Activated CD4-positive, alpha-beta memory T cell treated with anti-CD3 and anti-CD28 coated beads for 36 hours (primary cell): ENCODE measurements at regions of chr6 and their contacts with region 1.

Region 1: GRCh38 chr6:143026696-143027449 is 33.8 kb upstream of the AIG1 start:
- DNase-seq: peak; percentile 73
- H3K4me3 Mint-ChIP-seq: no peak overlapping the region
- H3K27ac Mint-ChIP-seq: no peak overlapping the region
- H3K4me1 Mint-ChIP-seq: peaks cover 6% of the 10 kb centered on the region
- H3K27me3 Mint-ChIP-seq: no peaks in the 10 kb centered on the region

Region 2: DNA sequence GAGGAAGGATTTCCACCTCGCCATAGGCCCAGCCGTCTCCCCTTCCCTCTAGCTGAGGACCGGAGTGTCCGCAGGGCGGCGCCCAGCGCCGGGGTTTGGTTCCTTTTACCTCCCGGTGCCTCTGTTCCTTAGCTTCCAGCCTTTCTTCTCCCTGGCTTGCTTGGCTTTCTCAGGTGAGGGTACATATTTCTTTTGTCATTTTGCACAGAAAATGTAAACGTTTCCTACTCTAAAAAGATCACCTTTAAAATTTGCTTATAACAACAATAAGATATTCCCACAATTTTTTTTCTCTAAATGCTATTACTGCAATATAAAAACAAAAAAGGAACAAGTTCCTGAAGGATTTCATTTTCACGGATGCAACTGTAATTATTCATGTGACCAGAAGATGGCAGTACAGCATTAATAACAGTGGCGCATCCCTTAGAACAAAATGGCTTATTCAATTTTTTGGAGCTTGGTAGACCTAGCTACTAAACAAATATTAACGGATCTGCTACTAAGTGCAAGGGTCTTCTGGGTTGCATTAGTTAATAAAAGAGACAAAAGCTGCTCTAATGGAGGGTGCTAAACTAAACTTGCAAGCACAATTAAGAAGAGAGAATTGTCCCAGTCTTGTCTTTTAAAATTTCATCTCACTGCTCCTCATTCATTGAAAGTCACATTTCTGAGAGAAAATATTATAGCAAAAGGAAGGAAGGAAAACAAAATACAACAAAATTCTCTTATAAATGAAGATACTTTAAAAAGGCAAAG is 552.2 kb before region 1 on chr6:
- CTCF ChIA-PET with region 1: interaction called, 6 read pairs
- POLR2A ChIA-PET with region 1: no interaction called
- intact Hi-C with region 1: loop called (anchors 5 kb)
- DNase-seq: no peak
- H3K4me3 Mint-ChIP-seq: no peak overlapping the region
- H3K27ac Mint-ChIP-seq: no peak overlapping the region
- H3K4me1 Mint-ChIP-seq: no peaks in the 10 kb centered on the region
- H3K27me3 Mint-ChIP-seq: peaks cover 2% of the 10 kb centered on the region

Region 3: DNA sequence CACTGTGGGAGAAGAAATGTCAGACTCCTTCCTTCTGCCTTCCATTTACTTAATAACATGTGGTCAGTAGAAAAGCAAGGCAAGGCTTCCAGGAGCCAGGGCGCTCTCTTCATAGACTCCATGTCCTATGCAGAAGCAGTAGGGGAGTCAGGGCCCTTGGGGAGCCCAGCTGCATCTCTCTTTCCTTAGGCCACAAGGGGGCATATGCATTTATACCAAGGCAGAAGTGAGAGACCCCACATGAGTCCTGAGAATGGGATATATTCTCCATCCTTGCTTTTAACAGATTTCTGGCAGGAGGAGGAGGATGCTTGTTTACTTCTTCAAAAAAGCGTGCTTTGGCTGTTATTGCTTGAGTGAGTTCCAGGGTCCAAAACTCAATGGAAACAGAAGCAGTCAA is 280.3 kb before region 1 on chr6:
- CTCF ChIA-PET with region 1: interaction called, 13 read pairs
- POLR2A ChIA-PET with region 1: no interaction called
- intact Hi-C with region 1: loop called (anchors 1 kb)
- DNase-seq: peak; percentile 23
- H3K4me3 Mint-ChIP-seq: no peak overlapping the region
- H3K27ac Mint-ChIP-seq: no peak overlapping the region
- H3K4me1 Mint-ChIP-seq: peaks cover 8% of the 10 kb centered on the region
- H3K27me3 Mint-ChIP-seq: no peaks in the 10 kb centered on the region

Region 4: DNA sequence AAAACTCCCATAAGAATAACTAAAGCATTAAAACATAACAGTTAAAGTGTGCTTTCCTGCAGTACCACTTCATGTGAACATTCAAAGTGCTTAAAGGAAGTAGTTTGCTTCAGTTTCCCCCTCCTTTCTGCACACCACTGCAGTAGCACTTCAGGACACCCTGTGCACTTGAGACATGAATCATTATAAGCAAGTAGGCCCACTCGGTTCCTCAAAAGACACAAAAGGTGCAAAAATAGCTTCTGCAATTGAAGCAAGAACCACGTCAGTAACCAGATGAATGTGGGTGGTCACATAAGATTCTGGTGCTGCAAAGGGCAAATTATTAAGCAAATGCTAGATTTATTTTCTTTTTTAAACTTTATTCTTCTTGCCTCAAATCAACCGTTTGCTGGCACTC is 242.5 kb before region 1 on chr6:
- CTCF ChIA-PET with region 1: no interaction called
- POLR2A ChIA-PET with region 1: no interaction called
- intact Hi-C with region 1: no loop called
- DNase-seq: no peak
- H3K4me3 Mint-ChIP-seq: no peak overlapping the region
- H3K27ac Mint-ChIP-seq: peak overlapping the region; percentile 36
- H3K4me1 Mint-ChIP-seq: peaks cover 67% of the 10 kb centered on the region
- H3K27me3 Mint-ChIP-seq: no peaks in the 10 kb centered on the region

Region 5: GRCh38 chr6:142833054-142833453 is 193.8 kb before region 1 on chr6:
- CTCF ChIA-PET with region 1: interaction called, 4 read pairs
- POLR2A ChIA-PET with region 1: no interaction called
- intact Hi-C with region 1: loop called (anchors 5 kb)
- DNase-seq: peak; percentile 67
- H3K4me3 Mint-ChIP-seq: no peak overlapping the region
- H3K27ac Mint-ChIP-seq: peak overlapping the region; percentile 35
- H3K4me1 Mint-ChIP-seq: peaks cover 79% of the 10 kb centered on the region
- H3K27me3 Mint-ChIP-seq: no peaks in the 10 kb centered on the region